IMR-90 (cell line): ENCODE measurements at regions of chr12 and their contacts with region 1.

Region 1: GRCh38 chr12:2179953-2180736 is 127.4 kb downstream of the CACNA1C start:
- DNase-seq: peak; percentile 98
- ATAC-seq: peak; percentile 83
- H3K4me3 ChIP-seq: no peak overlapping the region
- H3K27ac ChIP-seq: peak overlapping the region; percentile 68
- H3K4me1 ChIP-seq: peaks cover 24% of the 10 kb centered on the region
- H3K27me3 ChIP-seq: no peaks in the 10 kb centered on the region
- CTCF ChIP-seq: no peak
- POLR2A ChIP-seq: no peak
- RAD21 ChIP-seq: peak; percentile 27; the same call in 1 of the 2 replicates

Region 2: GRCh38 chr12:2248901-2249381 is 68.8 kb after region 1 on chr12:
- CTCF ChIA-PET with region 1: no interaction called
- POLR2A ChIA-PET with region 1: no interaction called
- dilution Hi-C with region 1: no loop called
- in situ Hi-C with region 1: no loop called
- intact Hi-C with region 1: loop called (anchors 1 kb)
- DNase-seq: peak; percentile 80
- ATAC-seq: no peak
- H3K4me3 ChIP-seq: no peak overlapping the region
- H3K27ac ChIP-seq: peak overlapping the region; percentile 86
- H3K4me1 ChIP-seq: peaks cover 52% of the 10 kb centered on the region
- H3K27me3 ChIP-seq: no peaks in the 10 kb centered on the region
- CTCF ChIP-seq: no peak
- POLR2A ChIP-seq: no peak
- RAD21 ChIP-seq: no peak

Region 3: GRCh38 chr12:2267703-2268501 is 87.8 kb after region 1 on chr12:
- CTCF ChIA-PET with region 1: no interaction called
- POLR2A ChIA-PET with region 1: no interaction called
- dilution Hi-C with region 1: no loop called
- in situ Hi-C with region 1: no loop called
- intact Hi-C with region 1: loop called (anchors 5 kb)
- DNase-seq: peak; percentile 54
- ATAC-seq: peak; percentile 21
- H3K4me3 ChIP-seq: no peak overlapping the region
- H3K27ac ChIP-seq: peak overlapping the region; percentile 32
- H3K4me1 ChIP-seq: peaks cover 47% of the 10 kb centered on the region
- H3K27me3 ChIP-seq: no peaks in the 10 kb centered on the region
- CTCF ChIP-seq: no peak
- POLR2A ChIP-seq: no peak
- RAD21 ChIP-seq: no peak